A549 (cell line): ENCODE measurements at regions of chr16 and their contacts with region 1.

Region 1: GRCh38 chr16:85717393-85718121 is 28.8 kb upstream of the GINS2 start:
- DNase-seq: peak; percentile 74 to 76
- ATAC-seq: peak; percentile 77 to 84
- H3K4me3 ChIP-seq: no peak overlapping the region
- H3K27ac ChIP-seq: no peak overlapping the region
- H3K4me1 ChIP-seq: no peaks in the 10 kb centered on the region
- CTCF ChIP-seq: peak; percentile 85
- EP300 ChIP-seq: no peak
- POLR2A ChIP-seq: no peak
- RAD21 ChIP-seq: peak; percentile 80 to 82

Region 2: DNA sequence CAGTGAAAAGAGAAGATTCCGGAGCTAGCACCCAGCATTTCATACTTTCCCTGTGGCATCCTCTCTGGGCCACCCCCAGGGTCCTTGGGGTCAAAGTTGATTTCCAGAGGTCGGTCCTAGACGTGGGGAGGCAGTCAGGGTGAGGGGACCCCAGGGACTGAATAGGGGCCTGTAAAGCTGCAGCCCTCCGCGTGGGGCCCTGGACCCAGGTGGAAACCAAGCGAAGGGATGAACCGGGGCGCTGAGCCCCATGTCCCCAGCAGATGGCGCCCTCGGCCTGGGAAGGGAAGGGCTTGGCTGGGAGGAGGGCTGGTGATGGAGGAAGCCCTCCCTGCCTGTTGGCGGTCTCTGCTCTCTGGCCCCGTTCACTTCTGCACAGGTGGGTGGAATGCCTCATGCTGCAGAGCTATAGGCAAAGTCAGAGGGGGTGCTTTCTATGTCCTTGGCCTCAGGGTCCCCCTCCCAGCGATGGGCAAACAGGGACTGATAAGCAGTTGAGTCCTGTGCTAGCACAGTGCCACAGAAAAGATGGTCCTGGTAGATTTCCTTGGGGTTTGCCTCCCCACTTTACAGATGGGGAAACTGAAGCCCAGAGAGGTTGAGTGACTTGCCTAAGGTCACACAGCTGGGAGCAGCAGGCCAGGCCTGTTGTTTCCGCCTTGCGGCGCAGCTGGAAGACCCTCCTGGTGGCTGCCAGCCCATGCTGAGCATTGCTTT is 441.9 kb before region 1 on chr16:
- CTCF ChIA-PET with region 1: interaction called, 11 read pairs
- POLR2A ChIA-PET with region 1: no interaction called
- DNase-seq: peak; percentile 55 to 86
- ATAC-seq: peak; percentile 87 to 97
- H3K4me3 ChIP-seq: no peak overlapping the region
- H3K27ac ChIP-seq: no peak overlapping the region
- H3K4me1 ChIP-seq: no peaks in the 10 kb centered on the region
- CTCF ChIP-seq: peak; percentile 83
- EP300 ChIP-seq: no peak
- POLR2A ChIP-seq: no peak
- RAD21 ChIP-seq: peak; percentile 73 to 82

Region 3: DNA sequence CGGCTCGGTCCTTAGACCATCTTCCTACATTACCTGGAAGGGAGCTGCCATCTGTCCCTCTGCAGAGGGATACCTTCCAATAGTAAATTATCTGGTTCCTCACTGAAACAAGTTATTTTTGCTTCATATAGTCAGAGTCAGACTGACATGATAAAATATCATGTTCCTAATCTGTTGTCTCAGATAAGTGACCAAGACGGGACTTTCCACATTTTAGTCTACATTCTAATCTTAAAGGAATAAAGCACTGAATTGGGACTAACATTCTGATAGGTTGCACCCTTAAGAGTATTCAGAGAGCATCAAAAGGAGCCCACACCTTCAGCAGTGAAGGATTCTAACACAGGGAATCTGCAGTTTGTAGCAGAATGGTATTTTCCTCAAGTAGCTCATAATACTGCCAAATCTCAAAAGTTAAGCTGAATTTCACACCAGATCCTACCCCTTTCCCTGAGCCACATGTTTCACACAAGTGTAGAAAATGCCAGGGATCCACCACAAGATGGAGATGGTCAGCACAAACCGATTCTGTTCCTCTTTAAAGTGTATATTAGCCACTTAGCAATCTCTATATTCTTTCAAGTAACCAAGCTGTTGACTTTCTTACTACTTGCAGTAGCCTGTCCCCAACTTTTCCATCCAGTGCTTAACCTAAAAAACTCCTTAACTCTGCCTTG is 42.2 kb before region 1 on chr16:
- CTCF ChIA-PET with region 1: interaction called, 128 read pairs
- POLR2A ChIA-PET with region 1: no interaction called
- DNase-seq: peak; percentile 36 to 45
- ATAC-seq: peak; percentile 73 to 76; a peak in 4 of 6 replicates
- H3K4me3 ChIP-seq: no peak overlapping the region
- H3K27ac ChIP-seq: no peak overlapping the region
- H3K4me1 ChIP-seq: no peaks in the 10 kb centered on the region
- CTCF ChIP-seq: peak; percentile 53
- EP300 ChIP-seq: no peak
- POLR2A ChIP-seq: no peak
- RAD21 ChIP-seq: peak in 1 of 2 experiments; percentile 29; a peak in 1 of 5 replicates

Region 4: DNA sequence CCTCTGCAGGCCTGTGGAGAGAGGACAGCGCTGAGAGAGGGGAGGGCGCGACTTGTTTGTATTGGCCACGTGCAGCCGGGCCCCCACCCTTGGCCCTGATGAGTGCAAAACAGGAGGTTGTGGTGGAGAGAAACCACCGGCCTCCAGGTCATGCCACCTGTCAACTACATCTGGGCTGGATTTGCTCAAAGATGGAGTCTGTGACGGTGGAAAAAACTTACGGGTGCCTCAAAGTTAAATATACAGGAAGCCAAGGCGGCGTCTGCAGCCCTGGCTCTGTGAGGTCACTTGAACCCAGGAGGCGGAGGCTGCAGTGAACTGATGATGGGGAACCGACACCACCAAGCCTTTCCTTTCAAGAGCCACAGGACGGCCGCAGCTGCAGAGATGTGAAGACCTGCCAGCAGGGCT is 17.7 kb after region 1 on chr16:
- CTCF ChIA-PET with region 1: interaction called, 130 read pairs
- POLR2A ChIA-PET with region 1: no interaction called
- DNase-seq: no peak
- ATAC-seq: no peak
- H3K4me3 ChIP-seq: no peak overlapping the region
- H3K27ac ChIP-seq: no peak overlapping the region
- H3K4me1 ChIP-seq: no peaks in the 10 kb centered on the region
- CTCF ChIP-seq: no peak
- EP300 ChIP-seq: no peak
- POLR2A ChIP-seq: no peak
- RAD21 ChIP-seq: no peak

Region 5: DNA sequence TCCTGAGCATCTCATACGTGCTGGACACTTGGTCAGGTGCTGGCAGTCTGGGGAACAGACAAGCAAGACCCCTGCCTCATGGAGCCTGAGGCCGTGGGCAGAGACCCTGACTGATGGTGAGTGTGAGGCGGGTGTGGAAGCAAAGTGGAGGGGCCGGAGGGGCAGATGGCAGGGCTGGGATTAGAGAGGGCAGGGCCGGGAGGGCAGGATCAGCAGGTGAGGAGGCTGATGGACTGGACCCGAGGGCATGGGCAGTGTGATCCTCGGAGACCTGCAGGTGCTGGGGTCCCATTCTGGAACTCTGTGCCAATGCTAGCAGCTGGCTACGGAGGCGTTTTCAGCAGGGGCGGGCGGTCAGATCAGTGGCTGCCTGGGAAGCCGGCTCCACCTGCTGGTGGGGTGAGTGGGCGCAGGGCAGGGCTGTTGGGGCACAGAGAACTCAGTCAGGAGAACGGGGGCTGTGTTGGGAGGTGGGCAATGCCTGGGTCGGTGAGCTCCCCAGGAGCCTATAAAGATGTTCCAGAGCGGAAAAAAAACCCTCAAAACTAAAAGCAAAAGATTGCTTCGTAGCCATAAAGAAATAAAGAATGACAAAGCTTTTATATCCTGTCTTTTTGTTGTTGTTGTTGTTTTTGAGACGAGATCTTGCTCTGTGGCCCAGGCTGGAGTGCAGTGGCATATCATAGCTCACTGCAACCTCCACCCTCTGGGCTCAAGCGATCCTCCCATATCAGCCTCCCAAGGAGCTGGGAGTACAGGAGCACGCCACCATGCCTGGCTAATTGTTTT is 42.3 kb after region 1 on chr16:
- CTCF ChIA-PET with region 1: interaction called, 24 read pairs
- POLR2A ChIA-PET with region 1: no interaction called
- DNase-seq: peak; percentile 41 to 55
- ATAC-seq: peak; percentile 81 to 93; a peak in 5 of 6 replicates
- H3K4me3 ChIP-seq: no peak overlapping the region
- H3K27ac ChIP-seq: no peak overlapping the region
- H3K4me1 ChIP-seq: no peaks in the 10 kb centered on the region
- CTCF ChIP-seq: peak; percentile 49
- EP300 ChIP-seq: no peak
- POLR2A ChIP-seq: no peak
- RAD21 ChIP-seq: peak; percentile 58 to 70